ENCODE measurements at regions of chr2 and their contacts with region 1.

Region 1: DNA sequence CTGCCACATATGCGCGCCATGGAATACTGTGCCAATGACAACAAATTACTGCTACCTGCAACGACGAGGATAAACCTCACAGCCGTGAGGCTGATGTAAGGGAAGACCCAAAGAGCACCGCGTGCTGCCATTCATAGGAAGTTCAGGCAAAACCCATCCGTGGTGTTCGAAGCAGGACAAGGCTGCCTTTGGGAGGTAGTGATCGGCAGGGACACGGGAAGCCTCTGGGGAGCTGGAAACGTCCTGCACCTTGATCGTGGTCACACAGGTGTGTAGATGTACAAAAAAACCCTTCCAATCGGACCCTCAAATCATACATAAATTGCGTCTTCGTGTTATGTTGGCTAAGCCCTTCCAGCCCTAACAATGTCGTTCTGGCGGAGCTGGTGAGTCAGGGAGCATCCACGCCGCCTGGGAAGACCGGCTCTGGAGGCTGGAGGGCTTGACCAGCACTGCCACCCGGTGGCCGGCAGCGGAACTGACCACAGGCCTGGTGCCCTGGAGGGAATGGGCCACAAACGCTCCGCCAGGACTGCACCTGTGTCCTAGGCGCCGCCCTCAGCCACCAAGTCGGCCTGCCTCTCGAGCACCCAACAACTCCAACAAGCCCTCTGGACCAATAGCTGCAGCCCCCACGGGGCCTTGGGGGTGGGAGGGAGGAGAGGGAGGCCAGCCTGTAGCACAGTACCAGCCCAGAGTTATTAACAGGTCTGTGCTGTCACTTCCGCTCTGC is 4.1 kb upstream of the NEURL3 start:
- DNase-seq: peak in 4 of 9 donors; percentile 32 to 79 (median 44)
- ATAC-seq: peak; percentile 64
- H3K4me3 ChIP-seq: no peak overlapping the region
- H3K4me3 Mint-ChIP-seq: peak overlapping the region in 7 of 10 donors; percentile 3 to 66 (median 40)
- H3K27ac ChIP-seq: no peak overlapping the region
- H3K27ac Mint-ChIP-seq: peak overlapping the region in 5 of 9 donors; percentile 28 to 74 (median 66)
- H3K4me1 ChIP-seq: peaks cover 3 to 4% of the 10 kb centered on the region in 2 donors
- H3K4me1 Mint-ChIP-seq: peaks cover 8 to 51% (median 13%) of the 10 kb centered on the region in 7 donors
- H3K27me3 ChIP-seq: no peaks in the 10 kb centered on the region
- H3K27me3 Mint-ChIP-seq: peaks cover 3 to 25% (median 17%) of the 10 kb centered on the region in 5 donors

Region 2: GRCh38 chr2:96208143-96209010 is 300.9 kb before region 1 on chr2 and contains the start of gene STARD7:
- CTCF ChIA-PET with region 1: no interaction called
- POLR2A ChIA-PET with region 1: no interaction called
- intact Hi-C with region 1: loop called in 1 of 2 experiments (anchors 1 kb)
- DNase-seq: peak; percentile 93 to 97 (median 95)
- ATAC-seq: peak; percentile 92
- H3K4me3 ChIP-seq: peak within 1 kb of the TSS; percentile 83
- H3K4me3 Mint-ChIP-seq: peak within 1 kb of the TSS; percentile 88 to 100 (median 95)
- H3K27ac ChIP-seq: peak within 1 kb of the TSS; percentile 87
- H3K27ac Mint-ChIP-seq: peak within 1 kb of the TSS; percentile 86 to 99 (median 93)
- H3K4me1 ChIP-seq: peaks cover 30 to 37% of the 10 kb centered on the region in 2 donors
- H3K4me1 Mint-ChIP-seq: peaks cover 37 to 57% (median 51%) of the 10 kb centered on the region in 7 donors
- H3K27me3 ChIP-seq: no peaks in the 10 kb centered on the region
- H3K27me3 Mint-ChIP-seq: no peaks in the 10 kb centered on the region
- total RNA-seq, gene STARD7: 56.5 to 133 (median 74.2) TPM

Region 3: DNA sequence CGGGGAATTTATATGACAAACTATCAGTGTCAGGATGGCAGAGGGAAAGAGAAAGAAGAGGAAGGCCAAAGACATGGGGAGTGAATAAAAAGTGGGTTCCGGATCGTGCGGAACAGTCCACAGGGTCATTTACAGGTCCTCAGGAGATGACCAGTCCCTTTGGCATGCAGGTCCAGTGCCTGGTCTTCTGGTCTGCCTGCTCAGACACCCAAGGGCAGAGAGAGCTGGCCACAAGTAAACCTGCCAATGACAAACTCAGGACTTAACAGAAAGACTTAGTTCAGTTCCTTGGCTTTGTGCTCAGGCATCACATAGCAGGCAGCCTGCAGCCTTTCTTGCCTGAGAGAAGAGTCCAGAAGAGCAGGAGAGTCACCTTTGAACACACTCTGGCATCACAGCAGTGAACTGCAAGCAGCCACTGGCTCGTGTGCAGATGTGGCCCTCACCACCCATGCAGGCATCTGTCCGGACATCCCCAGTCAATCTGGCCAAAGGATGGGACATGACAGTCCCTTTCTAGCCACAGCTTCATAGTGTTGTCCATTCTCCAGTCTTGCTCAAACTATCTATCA is 257.5 kb before region 1 on chr2:
- CTCF ChIA-PET with region 1: no interaction called
- POLR2A ChIA-PET with region 1: no interaction called
- intact Hi-C with region 1: no loop called
- DNase-seq: no peak
- ATAC-seq: peak; percentile 28
- H3K4me3 ChIP-seq: no peak overlapping the region
- H3K4me3 Mint-ChIP-seq: no peak overlapping the region
- H3K27ac ChIP-seq: peak overlapping the region; percentile 26
- H3K27ac Mint-ChIP-seq: peak overlapping the region in 6 of 9 donors; percentile 24 to 68 (median 58)
- H3K4me1 ChIP-seq: peaks cover 0 to 21% of the 10 kb centered on the region in 2 donors
- H3K4me1 Mint-ChIP-seq: peaks cover 22 to 59% (median 38%) of the 10 kb centered on the region in 7 donors
- H3K27me3 ChIP-seq: no peaks in the 10 kb centered on the region
- H3K27me3 Mint-ChIP-seq: no peaks in the 10 kb centered on the region

Region 4: GRCh38 chr2:96344011-96344410 is 165.3 kb before region 1 on chr2:
- CTCF ChIA-PET with region 1: no interaction called
- POLR2A ChIA-PET with region 1: no interaction called
- intact Hi-C with region 1: no loop called
- DNase-seq: no peak
- ATAC-seq: peak; percentile 88
- H3K4me3 ChIP-seq: no peak overlapping the region
- H3K4me3 Mint-ChIP-seq: no peak overlapping the region
- H3K27ac ChIP-seq: no peak overlapping the region
- H3K27ac Mint-ChIP-seq: peak overlapping the region in 2 of 9 donors; percentile 25 to 58
- H3K4me1 ChIP-seq: peaks cover 0 to 56% of the 10 kb centered on the region in 2 donors
- H3K4me1 Mint-ChIP-seq: peaks cover 0 to 43% (median 3%) of the 10 kb centered on the region in 7 donors
- H3K27me3 ChIP-seq: no peaks in the 10 kb centered on the region
- H3K27me3 Mint-ChIP-seq: no peaks in the 10 kb centered on the region

Region 5: GRCh38 chr2:96359310-96359709 is 150.0 kb before region 1 on chr2:
- CTCF ChIA-PET with region 1: interaction called, 5 read pairs
- POLR2A ChIA-PET with region 1: no interaction called
- intact Hi-C with region 1: loop called (anchors 1 to 5 kb)
- DNase-seq: peak in 8 of 9 donors; percentile 26 to 64 (median 46)
- ATAC-seq: peak; percentile 83
- H3K4me3 ChIP-seq: no peak overlapping the region
- H3K4me3 Mint-ChIP-seq: no peak overlapping the region
- H3K27ac ChIP-seq: no peak overlapping the region
- H3K27ac Mint-ChIP-seq: peak overlapping the region in 2 of 9 donors; percentile 33 to 64
- H3K4me1 ChIP-seq: peaks cover 0 to 12% of the 10 kb centered on the region in 2 donors
- H3K4me1 Mint-ChIP-seq: peaks cover 0 to 10% (median 1%) of the 10 kb centered on the region in 7 donors
- H3K27me3 ChIP-seq: no peaks in the 10 kb centered on the region
- H3K27me3 Mint-ChIP-seq: no peaks in the 10 kb centered on the region

Region 6: GRCh38 chr2:96470636-96471035 is 38.6 kb before region 1 on chr2:
- CTCF ChIA-PET with region 1: no interaction called
- POLR2A ChIA-PET with region 1: no interaction called
- intact Hi-C with region 1: loop called (anchors 1 to 2 kb)
- DNase-seq: peak; percentile 9 to 69 (median 32)
- ATAC-seq: peak; percentile 82
- H3K4me3 ChIP-seq: no peak overlapping the region
- H3K4me3 Mint-ChIP-seq: peak overlapping the region in 6 of 10 donors; percentile 6 to 70 (median 24)
- H3K27ac ChIP-seq: no peak overlapping the region
- H3K27ac Mint-ChIP-seq: peak overlapping the region in 1 of 9 donors; percentile 60
- H3K4me1 ChIP-seq: peaks cover 0 to 4% of the 10 kb centered on the region in 2 donors
- H3K4me1 Mint-ChIP-seq: peaks cover 3 to 10% (median 5%) of the 10 kb centered on the region in 7 donors
- H3K27me3 ChIP-seq: no peaks in the 10 kb centered on the region
- H3K27me3 Mint-ChIP-seq: peaks cover 5 to 12% (median 6%) of the 10 kb centered on the region in 5 donors

Region 7: DNA sequence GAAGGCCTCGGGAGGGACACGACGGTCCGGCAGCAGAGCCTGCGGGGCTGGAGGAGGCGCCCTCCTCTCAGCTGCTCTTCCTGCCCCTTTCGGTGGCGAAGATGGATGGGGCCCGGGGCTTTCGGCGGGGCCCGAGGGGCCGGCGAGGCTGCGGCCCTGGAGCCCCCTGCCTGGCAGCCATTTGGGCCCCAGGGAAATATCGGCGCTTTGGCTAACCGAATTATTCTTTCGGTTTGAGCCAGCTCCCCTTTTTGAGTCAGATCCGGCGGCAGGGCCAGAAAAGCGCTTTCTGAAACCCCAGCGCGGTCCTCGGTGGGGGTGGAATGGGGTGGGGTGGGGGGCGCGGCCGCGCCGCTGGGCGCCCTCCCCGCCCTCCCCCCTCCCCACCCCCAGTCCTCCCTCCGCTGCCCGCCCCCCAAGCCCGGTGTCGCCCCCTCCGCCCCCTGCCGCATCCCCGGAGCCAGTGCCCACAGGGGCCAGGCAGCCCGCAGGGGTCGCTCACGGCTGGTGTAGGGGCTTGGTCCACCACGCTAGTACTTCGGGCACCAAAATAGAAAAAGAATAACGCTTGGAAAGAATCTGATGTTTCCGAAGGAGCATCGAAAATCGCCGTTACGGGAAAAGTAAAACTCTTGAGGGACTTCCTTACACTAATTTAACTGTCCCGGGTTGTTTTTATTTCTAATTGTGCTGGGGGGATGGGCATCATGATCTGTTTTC is 18.2 kb after region 1 on chr2:
- CTCF ChIA-PET with region 1: interaction called, 4 read pairs
- POLR2A ChIA-PET with region 1: interaction called, 8 read pairs
- intact Hi-C with region 1: loop called in 1 of 2 experiments (anchors 2 kb)
- DNase-seq: peak in 5 of 9 donors; percentile 45 to 74 (median 46)
- ATAC-seq: peak; percentile 20
- H3K4me3 ChIP-seq: peak overlapping the region; percentile 77
- H3K4me3 Mint-ChIP-seq: peak overlapping the region; percentile 58 to 85 (median 83)
- H3K27ac ChIP-seq: peak overlapping the region; percentile 71
- H3K27ac Mint-ChIP-seq: peak overlapping the region; percentile 67 to 93 (median 87)
- H3K4me1 ChIP-seq: peaks cover 38 to 43% of the 10 kb centered on the region in 2 donors
- H3K4me1 Mint-ChIP-seq: peaks cover 32 to 90% (median 46%) of the 10 kb centered on the region in 7 donors
- H3K27me3 ChIP-seq: no peaks in the 10 kb centered on the region
- H3K27me3 Mint-ChIP-seq: no peaks in the 10 kb centered on the region

Region 8: DNA sequence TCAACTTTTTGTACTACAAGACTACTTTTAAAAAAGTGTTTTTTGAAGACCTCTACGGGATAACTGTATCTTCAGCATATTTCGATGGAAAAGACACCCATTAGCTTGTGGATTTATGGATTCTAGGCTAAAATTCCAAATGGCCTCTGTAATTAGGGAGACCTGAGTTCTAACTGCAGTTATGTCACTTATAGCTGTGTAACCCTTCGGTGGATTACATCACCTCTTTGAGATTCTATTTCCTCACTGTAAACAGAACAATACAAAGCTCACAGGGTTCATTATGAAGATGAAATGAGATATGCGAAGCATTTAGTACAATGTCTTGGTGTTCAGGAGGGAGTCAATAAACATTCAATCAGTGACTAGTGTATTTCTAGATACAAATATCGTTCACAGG is 206.4 kb after region 1 on chr2:
- CTCF ChIA-PET with region 1: no interaction called
- POLR2A ChIA-PET with region 1: no interaction called
- intact Hi-C with region 1: no loop called
- DNase-seq: no peak
- ATAC-seq: no peak
- H3K4me3 ChIP-seq: no peak overlapping the region
- H3K4me3 Mint-ChIP-seq: no peak overlapping the region
- H3K27ac ChIP-seq: no peak overlapping the region
- H3K27ac Mint-ChIP-seq: no peak overlapping the region
- H3K4me1 ChIP-seq: no peaks in the 10 kb centered on the region
- H3K4me1 Mint-ChIP-seq: peaks cover 0 to 3% (median 0%) of the 10 kb centered on the region in 7 donors
- H3K27me3 ChIP-seq: no peaks in the 10 kb centered on the region
- H3K27me3 Mint-ChIP-seq: no peaks in the 10 kb centered on the region

Measured in naive thymus-derived CD4-positive, alpha-beta T cell (primary cell).